ENCODE measurements at regions of chr1 and their contacts with region 1.

Region 1: GRCh38 chr1:77143529-77144121 is 75.6 kb downstream of the PIGK start:
- DNase-seq: no peak
- ATAC-seq: no peak
- H3K4me3 ChIP-seq: no peak overlapping the region
- H3K27ac ChIP-seq: no peak overlapping the region
- H3K4me1 ChIP-seq: no peaks in the 10 kb centered on the region
- H3K27me3 ChIP-seq: no peaks in the 10 kb centered on the region
- CTCF ChIP-seq: peak; percentile 32

Region 2: GRCh38 chr1:76154206-76154956 is 989.2 kb before region 1 on chr1:
- intact Hi-C with region 1: loop called in 1 of 2 experiments (anchors 10 kb)
- DNase-seq: peak; percentile 65 to 82
- ATAC-seq: peak; percentile 83 to 98 (median 88)
- H3K4me3 ChIP-seq: peak overlapping the region; percentile 50
- H3K27ac ChIP-seq: no peak overlapping the region
- H3K4me1 ChIP-seq: peaks cover 9% of the 10 kb centered on the region
- H3K27me3 ChIP-seq: no peaks in the 10 kb centered on the region
- CTCF ChIP-seq: peak; percentile 96

Region 3: GRCh38 chr1:77533660-77534305 is 390.2 kb after region 1 on chr1:
- intact Hi-C with region 1: loop called in 1 of 2 experiments (anchors 2 kb)
- DNase-seq: peak; percentile 40 to 64
- ATAC-seq: peak in 3 of 4 donors; percentile 51 to 66 (median 61)
- H3K4me3 ChIP-seq: no peak overlapping the region
- H3K27ac ChIP-seq: no peak overlapping the region
- H3K4me1 ChIP-seq: peaks cover 4% of the 10 kb centered on the region
- H3K27me3 ChIP-seq: no peaks in the 10 kb centered on the region
- CTCF ChIP-seq: peak; percentile 78

Region 4: GRCh38 chr1:77683160-77684148 is 539.8 kb after region 1 on chr1:
- intact Hi-C with region 1: loop called in 1 of 2 experiments (anchors 5 kb)
- DNase-seq: peak; percentile 94 to 97
- ATAC-seq: peak; percentile 90 to 92 (median 92)
- H3K4me3 ChIP-seq: peak overlapping the region; percentile 77
- H3K27ac ChIP-seq: peak overlapping the region; percentile 83
- H3K4me1 ChIP-seq: peaks cover 33% of the 10 kb centered on the region
- H3K27me3 ChIP-seq: no peaks in the 10 kb centered on the region
- CTCF ChIP-seq: peak; percentile 95

Measured in psoas muscle (tissue), 8 donors.